WTC11 (cell line): ENCODE measurements at regions of chr5 and their contacts with region 1.

Region 1: DNA sequence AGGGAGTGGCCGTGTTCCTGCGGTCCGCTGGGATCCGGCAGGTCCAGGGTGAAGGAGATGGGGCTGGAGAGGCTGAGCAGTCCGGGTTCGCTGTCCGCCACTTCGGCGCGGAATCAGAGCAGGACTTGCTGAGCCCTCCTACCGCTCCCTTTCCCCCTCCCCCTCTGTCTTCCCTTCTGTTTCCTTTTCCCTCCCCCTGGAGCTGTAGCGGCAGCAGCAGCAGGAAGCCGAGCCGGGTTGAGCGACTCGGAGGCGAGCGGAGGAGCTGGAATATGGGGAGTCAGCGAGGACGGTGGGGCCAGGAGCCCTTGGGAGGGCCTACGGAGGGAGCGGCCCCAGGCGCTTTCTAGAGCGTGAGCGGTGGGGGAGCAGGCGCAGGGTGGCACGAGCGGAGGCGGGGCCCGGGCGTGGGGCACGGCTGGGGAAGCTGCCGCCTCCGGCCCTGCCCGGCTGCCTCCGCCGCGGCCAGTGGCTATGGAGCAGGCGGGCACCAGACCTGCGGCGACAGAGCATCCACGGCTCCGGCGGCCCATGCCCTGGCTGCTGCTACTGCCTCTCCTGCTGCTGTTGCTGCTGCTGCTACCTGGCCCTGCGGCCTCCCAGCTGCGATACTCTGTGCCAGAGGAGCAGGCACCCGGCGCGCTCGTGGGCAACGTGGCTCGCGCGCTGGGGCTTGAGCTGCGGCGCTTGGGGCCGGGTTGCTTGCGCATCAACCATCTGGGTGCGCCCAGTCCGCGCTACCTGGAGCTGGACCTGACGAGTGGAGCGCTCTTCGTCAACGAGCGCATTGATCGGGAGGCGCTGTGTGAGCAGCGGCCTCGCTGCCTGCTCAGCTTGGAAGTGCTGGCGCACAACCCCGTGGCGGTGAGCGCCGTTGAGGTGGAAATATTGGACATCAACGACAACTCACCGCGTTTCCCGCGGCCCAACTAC is at the start of gene PCDHAC2:
- DNase-seq: peak; percentile 78
- ATAC-seq: peak; percentile 77
- H3K4me3 Mint-ChIP-seq: peak within 1 kb of the TSS; percentile 92
- H3K27ac Mint-ChIP-seq: peak within 1 kb of the TSS; percentile 51; the same call in 1 of the 2 replicates
- H3K4me1 Mint-ChIP-seq: peaks cover 50% of the 10 kb centered on the region
- H3K27me3 Mint-ChIP-seq: peaks cover 21% of the 10 kb centered on the region
- CTCF ChIP-seq: no peak
- total RNA-seq, gene PCDHAC2: 6.7 to 11.3 TPM (median 7.9 TPM) in 3 replicates

Region 2: DNA sequence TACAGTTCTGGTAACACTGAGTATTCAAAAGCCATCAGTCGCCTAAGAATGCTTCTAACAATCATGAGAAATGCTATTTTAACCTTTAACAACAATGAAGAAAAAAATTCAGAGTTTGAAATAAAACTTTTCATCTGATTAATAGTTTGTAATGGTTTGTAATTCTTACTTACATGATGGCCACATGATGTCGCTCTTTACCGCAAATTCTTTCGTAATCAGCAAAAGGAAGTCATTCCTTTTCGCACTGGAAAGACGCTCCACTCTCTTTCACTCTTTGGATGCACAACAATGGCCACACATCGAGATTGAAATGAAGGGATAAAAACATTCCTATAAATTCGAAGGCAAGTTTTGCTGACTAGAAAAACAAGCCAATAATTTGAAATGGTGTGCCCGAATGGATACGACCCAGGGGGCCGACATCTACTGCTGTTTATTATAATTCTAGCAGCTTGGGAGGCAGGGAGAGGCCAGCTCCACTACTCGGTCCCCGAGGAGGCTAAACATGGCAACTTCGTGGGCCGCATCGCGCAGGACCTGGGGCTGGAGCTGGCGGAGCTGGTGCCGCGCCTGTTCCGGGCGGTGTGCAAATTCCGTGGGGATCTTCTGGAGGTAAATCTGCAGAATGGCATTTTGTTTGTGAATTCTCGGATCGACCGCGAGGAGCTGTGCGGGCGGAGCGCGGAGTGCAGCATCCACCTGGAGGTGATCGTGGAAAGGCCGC is 132.4 kb before region 1 on chr5 and contains the start of gene PCDHA7:
- CTCF ChIA-PET with region 1: no interaction called
- POLR2A ChIA-PET with region 1: no interaction called
- DNase-seq: no peak
- ATAC-seq: no peak
- H3K4me3 Mint-ChIP-seq: peak within 1 kb of the TSS; percentile 87
- H3K27ac Mint-ChIP-seq: peak within 1 kb of the TSS; percentile 93
- H3K4me1 Mint-ChIP-seq: no peaks in the 10 kb centered on the region
- H3K27me3 Mint-ChIP-seq: no peaks in the 10 kb centered on the region
- CTCF ChIP-seq: no peak
- total RNA-seq, gene PCDHA7: 2.3 to 2.7 TPM (median 2.4 TPM) in 3 replicates

Region 3: DNA sequence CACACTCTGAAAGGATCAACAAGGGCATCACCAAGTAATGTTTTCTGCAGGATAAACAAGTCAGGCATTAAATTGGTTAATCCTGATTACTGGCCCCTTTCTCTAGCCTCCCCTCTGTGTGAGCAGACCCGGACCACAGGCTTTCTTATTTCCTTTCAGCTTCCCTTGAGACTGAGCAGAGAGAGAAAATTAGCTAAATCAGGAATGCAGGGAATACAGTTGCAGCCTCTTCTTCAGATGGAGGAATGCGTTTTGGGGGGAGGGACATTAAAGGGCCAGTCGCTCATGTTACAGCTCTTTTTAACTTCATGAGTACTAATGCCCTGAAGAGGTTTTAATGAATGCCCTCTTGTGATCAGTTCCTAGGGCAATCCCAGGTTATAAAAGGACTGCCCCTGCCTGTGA is 19.6 kb after region 1 on chr5:
- CTCF ChIA-PET with region 1: interaction called, 18 read pairs
- POLR2A ChIA-PET with region 1: interaction called, 13 read pairs
- DNase-seq: no peak
- ATAC-seq: peak; percentile 89
- H3K4me3 Mint-ChIP-seq: peak overlapping the region; percentile 31
- H3K27ac Mint-ChIP-seq: peak overlapping the region; percentile 98
- H3K4me1 Mint-ChIP-seq: peaks cover 56% of the 10 kb centered on the region
- H3K27me3 Mint-ChIP-seq: no peaks in the 10 kb centered on the region
- CTCF ChIP-seq: no peak

Region 4: DNA sequence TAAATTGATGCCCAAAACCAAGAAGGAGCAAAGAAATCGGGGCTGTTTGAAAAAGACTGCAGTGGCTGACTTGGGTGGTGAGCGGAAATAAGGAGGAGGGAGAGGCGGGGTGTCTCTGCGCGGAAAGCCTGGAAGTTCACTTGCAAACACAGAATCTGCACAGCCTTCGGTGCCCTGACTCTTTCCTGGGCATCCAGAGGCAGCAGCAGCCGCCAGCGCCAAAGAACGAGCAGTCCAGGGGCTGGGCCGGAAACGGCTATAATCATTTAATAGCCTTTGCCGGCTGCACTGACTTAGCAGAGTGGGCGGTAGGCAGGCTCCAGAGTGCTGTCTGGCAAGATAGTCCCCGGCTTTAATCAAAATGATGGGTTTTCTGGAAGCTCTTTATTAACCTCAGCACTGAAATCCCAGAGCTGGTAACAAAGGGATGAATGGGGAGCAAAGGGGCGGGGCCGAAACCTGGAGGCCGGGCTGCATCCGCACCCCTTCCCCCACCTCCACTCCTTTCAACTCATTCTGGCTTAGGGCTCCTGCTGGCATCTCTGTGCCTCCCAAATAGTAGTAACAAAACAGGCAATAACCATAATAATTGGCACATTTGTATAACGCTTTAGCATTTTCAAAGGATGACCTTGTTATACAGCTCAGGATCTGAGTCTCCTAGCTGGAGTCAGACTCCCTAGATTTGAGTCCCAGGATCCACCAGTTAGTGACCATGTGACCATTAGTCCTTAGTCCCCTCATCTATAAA is 35.5 kb after region 1 on chr5:
- CTCF ChIA-PET with region 1: interaction called, 13 read pairs
- POLR2A ChIA-PET with region 1: interaction called, 30 read pairs
- DNase-seq: peak; percentile 87
- ATAC-seq: peak; percentile 72
- H3K4me3 Mint-ChIP-seq: peak overlapping the region; percentile 85
- H3K27ac Mint-ChIP-seq: peak overlapping the region; percentile 99
- H3K4me1 Mint-ChIP-seq: peaks cover 71% of the 10 kb centered on the region
- H3K27me3 Mint-ChIP-seq: no peaks in the 10 kb centered on the region
- CTCF ChIP-seq: no peak

Region 5: GRCh38 chr5:141032626-141033025 is 66.1 kb after region 1 on chr5:
- CTCF ChIA-PET with region 1: interaction called, 14 read pairs
- POLR2A ChIA-PET with region 1: no interaction called
- DNase-seq: no peak
- ATAC-seq: peak; percentile 48; the same call in 1 of the 2 replicates
- H3K4me3 Mint-ChIP-seq: no peak overlapping the region
- H3K27ac Mint-ChIP-seq: no peak overlapping the region
- H3K4me1 Mint-ChIP-seq: no peaks in the 10 kb centered on the region; the same call in 1 of the 2 replicates
- H3K27me3 Mint-ChIP-seq: no peaks in the 10 kb centered on the region
- CTCF ChIP-seq: no peak